GM10248 (cell line): ENCODE measurements at regions of chr16 and their contacts with region 1.

Region 1: DNA sequence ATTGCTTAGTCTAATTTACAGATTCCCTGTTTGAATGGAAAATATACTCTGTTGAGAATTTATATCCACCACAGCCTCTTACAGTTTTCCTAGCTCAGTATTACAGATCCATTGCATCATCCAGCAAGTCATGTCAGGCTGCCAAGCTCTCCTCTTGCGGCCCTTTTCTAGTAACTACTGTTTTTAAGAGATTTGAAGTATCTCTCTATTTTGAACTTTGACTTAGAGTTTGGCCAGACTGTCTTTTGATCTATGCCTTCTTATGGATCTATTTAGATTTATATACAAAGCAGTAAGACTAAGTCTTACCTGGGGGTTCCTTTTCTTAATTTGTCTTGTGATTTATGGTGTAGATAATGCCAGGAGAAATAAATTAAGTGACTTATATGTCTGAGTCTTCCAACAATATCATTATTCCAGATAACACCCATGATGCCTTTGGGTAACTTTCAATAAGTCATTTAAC is 53.1 kb upstream of the ABCC11 start:
- DNase-seq: no peak
- CTCF ChIP-seq: no peak

Region 2: GRCh38 chr16:48310908-48311641 is 10.7 kb after region 1 on chr16:
- CTCF ChIA-PET with region 1: interaction called, 10 read pairs
- POLR2A ChIA-PET with region 1: no interaction called
- DNase-seq: no peak
- CTCF ChIP-seq: no peak

Region 3: DNA sequence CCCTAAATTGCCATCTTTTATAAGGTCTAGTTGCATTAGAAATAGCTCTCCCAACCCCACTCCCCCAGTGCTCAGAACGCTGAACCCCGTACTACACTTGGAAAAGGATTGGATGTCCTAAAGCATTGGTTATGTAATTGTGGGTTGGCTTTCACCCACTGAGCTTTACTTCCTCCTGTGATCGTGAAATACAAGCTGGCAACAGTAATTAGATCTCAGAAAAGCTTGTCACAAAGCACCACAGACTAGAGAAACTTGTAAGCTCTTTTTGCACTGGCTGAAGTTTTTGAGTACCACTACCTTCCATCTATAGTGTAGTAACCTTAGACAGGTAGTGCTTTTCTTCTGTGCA is 30.4 kb after region 1 on chr16:
- CTCF ChIA-PET with region 1: no interaction called
- POLR2A ChIA-PET with region 1: no interaction called
- DNase-seq: no peak
- CTCF ChIP-seq: no peak